Esophagus squamous epithelium (tissue), 5 donors: ENCODE measurements at regions of chr11 and their contacts with region 1.

Region 1: DNA sequence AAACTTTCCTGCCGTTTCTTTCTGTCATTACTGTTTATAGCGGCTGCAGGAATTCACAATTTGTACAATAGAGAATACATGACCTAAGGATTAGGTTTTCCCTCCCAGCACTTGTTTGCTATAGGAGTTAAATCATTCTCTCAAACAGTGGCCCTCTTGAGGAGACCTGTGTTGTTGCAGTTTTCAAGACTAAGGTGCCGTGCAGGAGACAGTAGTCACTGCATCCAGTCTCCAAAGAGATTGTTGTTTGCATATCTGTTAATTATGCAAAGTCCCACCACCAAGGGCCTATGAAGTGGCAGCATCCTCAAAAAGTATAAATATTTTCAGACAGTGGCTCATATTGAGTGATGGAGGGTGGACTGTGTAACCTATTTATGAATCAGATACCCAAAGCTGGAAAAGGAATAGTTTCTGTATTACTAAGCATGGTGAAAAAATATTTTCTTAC is 2.3 kb downstream of the PRSS23 start:
- DNase-seq: no peak
- H3K4me3 ChIP-seq: peak overlapping the region in 2 of 4 donors; percentile 66 to 81
- H3K27ac ChIP-seq: peak overlapping the region in 2 of 4 donors; percentile 74 to 80
- H3K4me1 ChIP-seq: peaks cover 14 to 51% (median 21%) of the 10 kb centered on the region in 3 donors
- H3K27me3 ChIP-seq: peaks cover 0 to 22% (median 0%) of the 10 kb centered on the region in 4 donors
- CTCF ChIP-seq: peak in 5 of 6 experiments; percentile 39 to 74 (median 54)
- POLR2A ChIP-seq: no peak

Region 2: DNA sequence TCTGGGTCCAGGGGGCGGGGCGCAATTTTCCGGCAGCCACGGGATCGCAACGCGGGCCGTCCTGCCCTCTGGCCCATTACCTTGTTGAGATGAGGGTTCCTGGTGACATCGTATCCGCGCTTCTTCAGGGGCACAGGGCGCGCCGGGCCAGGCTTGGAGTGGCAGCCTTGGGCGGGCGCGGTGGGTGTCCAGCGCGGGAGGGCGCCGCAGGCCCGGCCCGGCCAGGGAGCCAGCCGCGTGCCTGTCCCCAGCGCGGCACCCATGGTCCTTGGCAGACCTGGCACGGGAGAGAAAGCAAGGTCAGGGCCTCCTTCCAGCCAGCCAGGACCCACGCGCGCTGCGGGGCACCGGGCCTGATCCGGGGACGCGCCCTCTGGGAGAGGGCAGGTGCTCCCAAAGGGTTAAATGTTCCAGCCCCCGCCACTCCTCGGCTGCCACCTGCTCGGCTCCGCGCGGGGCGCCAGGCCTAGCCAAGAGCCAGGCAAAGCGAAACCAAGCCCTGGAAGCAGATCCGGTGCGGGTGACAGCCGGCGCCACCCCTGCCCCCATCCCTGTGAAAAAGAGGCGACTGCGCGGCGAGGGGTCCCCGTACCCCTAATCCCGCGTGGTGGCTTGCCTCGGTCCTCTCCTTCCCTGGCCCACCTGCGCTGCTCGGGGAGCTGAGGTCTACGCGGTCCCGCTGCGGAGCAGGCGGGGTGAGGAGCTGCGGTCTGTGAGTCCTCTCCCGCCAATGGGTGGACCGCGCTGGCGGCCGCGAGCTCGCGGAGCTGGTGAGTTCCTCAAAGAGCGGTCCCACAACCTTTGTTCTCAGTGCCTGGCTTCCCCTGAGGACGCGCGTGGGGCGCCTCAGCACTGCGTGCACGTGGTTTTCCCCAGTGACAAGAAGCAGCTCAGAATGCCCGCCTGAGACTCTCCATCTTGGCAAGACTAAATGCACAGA is 130.7 kb before region 1 on chr11 and contains the start of gene ME3:
- intact Hi-C with region 1: loop called (anchors 10 kb)
- DNase-seq: no peak
- H3K4me3 ChIP-seq: peak within 1 kb of the TSS; percentile 58 to 84 (median 74)
- H3K27ac ChIP-seq: peak within 1 kb of the TSS; percentile 82 to 95 (median 92)
- H3K4me1 ChIP-seq: peaks cover 0 to 56% (median 7%) of the 10 kb centered on the region in 3 donors
- H3K27me3 ChIP-seq: peaks cover 0 to 8% (median 0%) of the 10 kb centered on the region in 4 donors
- CTCF ChIP-seq: no peak
- POLR2A ChIP-seq: peak in 2 of 4 donors; percentile 21 to 29
- total RNA-seq, gene ME3: 1.9 to 18.3 (median 5.6) TPM

Region 3: GRCh38 chr11:87265132-87265531 is 462.5 kb after region 1 on chr11:
- intact Hi-C with region 1: no loop called
- DNase-seq: no peak
- H3K4me3 ChIP-seq: no peak overlapping the region
- H3K27ac ChIP-seq: no peak overlapping the region
- H3K4me1 ChIP-seq: no peaks in the 10 kb centered on the region
- H3K27me3 ChIP-seq: no peaks in the 10 kb centered on the region
- CTCF ChIP-seq: no peak
- POLR2A ChIP-seq: no peak